Colonic mucosa (tissue), 4 donors: ENCODE measurements at regions of chr1 and their contacts with region 1.

Region 1: DNA sequence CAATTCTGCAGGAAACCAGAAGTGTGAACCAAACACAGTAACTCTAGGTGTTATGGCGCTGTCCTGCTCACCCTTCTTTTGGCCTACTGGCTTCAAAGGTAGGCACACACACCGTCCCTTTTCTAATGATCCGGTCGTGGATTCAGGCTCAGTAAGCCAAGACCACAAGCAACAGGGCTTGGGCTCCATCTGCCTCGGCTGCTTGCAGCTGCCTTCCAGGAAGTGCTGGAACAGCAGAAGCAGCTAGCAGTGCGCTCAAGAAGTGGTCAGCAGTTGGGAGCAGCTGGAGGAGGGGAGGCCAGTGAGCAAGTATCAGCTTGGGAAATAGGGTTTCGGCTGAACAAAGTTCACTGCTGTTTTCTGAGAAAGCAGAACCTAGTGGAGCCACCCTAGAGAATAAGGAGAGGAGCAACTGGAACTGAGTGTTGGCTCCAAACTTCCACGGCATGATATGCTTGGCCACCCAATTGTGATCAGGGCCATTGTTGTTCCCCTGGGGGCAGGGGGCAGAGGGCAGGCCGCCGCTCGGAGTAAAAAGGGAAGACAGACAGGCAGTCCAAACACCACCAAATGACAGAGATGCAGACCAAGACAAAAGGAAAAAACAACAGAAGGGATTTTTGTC is 173.4 kb downstream of the TOMM20 start:
- DNase-seq: peak; percentile 84
- H3K4me3 ChIP-seq: no peak overlapping the region
- H3K27ac ChIP-seq: peak overlapping the region; percentile 98
- H3K4me1 ChIP-seq: peaks cover 24% of the 10 kb centered on the region
- H3K27me3 ChIP-seq: no peaks in the 10 kb centered on the region
- CTCF ChIP-seq: no peak

Region 2: GRCh38 chr1:234722904-234723720 is 232.1 kb before region 1 on chr1:
- intact Hi-C with region 1: loop called (anchors 5 kb)
- DNase-seq: peak; percentile 65
- H3K4me3 ChIP-seq: no peak overlapping the region
- H3K27ac ChIP-seq: peak overlapping the region; percentile 99
- H3K4me1 ChIP-seq: peaks cover 44% of the 10 kb centered on the region
- H3K27me3 ChIP-seq: no peaks in the 10 kb centered on the region
- CTCF ChIP-seq: no peak

Region 3: DNA sequence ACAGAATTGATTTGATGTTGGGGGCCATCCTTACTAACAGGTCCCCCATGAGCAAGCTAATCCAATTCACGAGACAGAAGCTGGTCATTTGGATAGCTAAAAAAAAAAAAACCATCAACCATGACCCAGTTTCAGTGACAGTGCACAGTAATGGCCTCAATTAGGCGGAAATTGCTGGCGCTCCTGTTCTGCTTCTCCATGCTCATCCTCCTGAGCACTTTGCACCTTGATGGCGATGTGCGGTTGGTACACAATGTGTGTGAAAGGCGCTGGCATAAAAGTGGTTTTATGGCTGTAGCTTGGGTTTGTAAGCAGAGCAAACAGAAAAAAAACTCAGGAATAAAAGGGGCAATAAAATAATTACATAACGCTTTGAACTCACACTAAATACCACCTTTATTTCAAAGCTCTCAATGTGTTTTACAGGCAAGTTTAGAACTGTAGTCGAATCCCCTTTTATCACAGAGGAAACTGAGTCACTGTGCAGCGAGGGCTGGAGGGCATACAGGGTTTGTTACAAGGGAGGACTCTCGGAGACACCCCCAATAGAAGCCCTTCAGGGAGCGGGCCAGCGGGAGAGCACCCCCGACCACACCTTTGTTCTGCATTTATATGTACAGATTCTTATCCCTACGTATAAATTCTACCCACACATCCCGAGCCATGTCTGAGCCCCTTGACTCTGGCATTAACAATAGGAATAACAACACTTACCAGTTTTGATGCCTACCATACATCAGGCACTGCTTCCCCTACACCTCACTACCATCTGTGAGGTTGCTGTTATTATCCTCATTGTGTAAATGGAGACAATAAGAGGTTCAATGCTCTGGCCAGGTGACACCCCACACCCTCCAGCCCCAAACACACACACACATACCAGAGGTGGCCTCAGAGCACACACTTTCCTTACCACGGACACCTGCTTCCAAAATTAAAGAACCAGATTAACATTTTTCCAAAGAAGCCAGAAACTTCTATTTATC is 131.7 kb before region 1 on chr1:
- intact Hi-C with region 1: loop called (anchors 10 kb)
- DNase-seq: peak; percentile 87
- H3K4me3 ChIP-seq: no peak overlapping the region
- H3K27ac ChIP-seq: peak overlapping the region; percentile 75
- H3K4me1 ChIP-seq: peaks cover 4% of the 10 kb centered on the region
- H3K27me3 ChIP-seq: no peaks in the 10 kb centered on the region
- CTCF ChIP-seq: no peak